ENCODE measurements at regions of chr3 and their contacts with region 1.

Region 1: GRCh38 chr3:143895805-143896204 is 47.5 kb upstream of the SLC9A9 start:
- DNase-seq: no peak
- ATAC-seq: no peak
- H3K4me3 ChIP-seq: no peak overlapping the region
- H3K27ac ChIP-seq: no peak overlapping the region
- H3K4me1 ChIP-seq: no peaks in the 10 kb centered on the region
- H3K27me3 ChIP-seq: peaks cover 2% of the 10 kb centered on the region; the same call in 1 of the 2 replicates
- CTCF ChIP-seq: peak; percentile 43; the same call in 1 of the 2 replicates

Region 2: DNA sequence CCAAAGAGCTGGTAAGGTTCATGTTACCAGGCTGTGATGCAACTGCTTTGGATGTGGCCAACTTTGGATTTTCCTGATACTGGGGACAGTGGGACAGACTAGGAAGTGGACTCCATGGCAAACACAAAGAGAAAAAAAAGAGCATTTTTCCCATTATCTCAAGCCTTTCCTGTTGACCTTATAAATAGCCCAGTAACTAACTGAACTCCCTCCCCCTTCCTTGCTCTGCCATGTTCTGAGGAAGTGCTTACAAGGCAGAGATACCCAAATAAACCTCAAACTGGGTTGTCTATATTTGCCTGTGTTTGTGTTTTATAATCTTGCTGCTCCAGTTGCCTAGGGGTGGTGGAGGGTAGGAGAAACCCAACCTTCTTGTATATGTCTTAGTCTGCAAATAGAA is 20.3 kb before region 1 on chr3:
- CTCF ChIA-PET with region 1: no interaction called
- POLR2A ChIA-PET with region 1: no interaction called
- in situ Hi-C with region 1: no loop called
- intact Hi-C with region 1: no loop called
- DNase-seq: no peak
- ATAC-seq: no peak
- H3K4me3 ChIP-seq: no peak overlapping the region
- H3K27ac ChIP-seq: no peak overlapping the region
- H3K4me1 ChIP-seq: no peaks in the 10 kb centered on the region
- H3K27me3 ChIP-seq: no peaks in the 10 kb centered on the region
- CTCF ChIP-seq: no peak

Region 3: GRCh38 chr3:143951351-143951971 is 55.7 kb after region 1 on chr3:
- CTCF ChIA-PET with region 1: no interaction called
- POLR2A ChIA-PET with region 1: no interaction called
- in situ Hi-C with region 1: no loop called
- intact Hi-C with region 1: loop called (anchors 5 kb)
- DNase-seq: no peak
- ATAC-seq: no peak
- H3K4me3 ChIP-seq: no peak overlapping the region
- H3K27ac ChIP-seq: no peak overlapping the region
- H3K4me1 ChIP-seq: no peaks in the 10 kb centered on the region
- H3K27me3 ChIP-seq: no peaks in the 10 kb centered on the region
- CTCF ChIP-seq: peak; percentile 68; the same call in 1 of the 2 replicates

Region 4: GRCh38 chr3:145557405-145557804 is 1661.6 kb after region 1 on chr3:
- CTCF ChIA-PET with region 1: interaction called, 10 read pairs
- POLR2A ChIA-PET with region 1: no interaction called
- in situ Hi-C with region 1: no loop called
- intact Hi-C with region 1: no loop called
- DNase-seq: no peak
- ATAC-seq: no peak
- H3K4me3 ChIP-seq: no peak overlapping the region
- H3K27ac ChIP-seq: no peak overlapping the region
- H3K4me1 ChIP-seq: no peaks in the 10 kb centered on the region
- H3K27me3 ChIP-seq: no peaks in the 10 kb centered on the region
- CTCF ChIP-seq: no peak

Measured in Panc1 (cell line).